Mammary epithelial cell (primary cell): ENCODE measurements at regions of chr12 and their contacts with region 1.

Region 1: GRCh38 chr12:12813120-12814101 is at the start of gene DDX47:
- DNase-seq: peak; percentile 86
- H3K4me3 ChIP-seq: peak within 1 kb of the TSS; percentile 60 to 86 (median 71)
- H3K27ac ChIP-seq: peak within 1 kb of the TSS; percentile 93
- H3K4me1 ChIP-seq: peaks cover 21% of the 10 kb centered on the region
- H3K27me3 ChIP-seq: no peaks in the 10 kb centered on the region
- CTCF ChIP-seq: peak; percentile 93 to 96
- total RNA-seq, gene DDX47: 62.1 to 70.3 TPM

Region 2: GRCh38 chr12:12803186-12803585 is 10.2 kb before region 1 on chr12:
- CTCF ChIA-PET with region 1: no interaction called
- dilution Hi-C with region 1: no loop called
- in situ Hi-C with region 1: no loop called
- intact Hi-C with region 1: loop called (anchors 1 kb)
- DNase-seq: peak; percentile 100
- H3K4me3 ChIP-seq: no peak overlapping the region
- H3K27ac ChIP-seq: peak overlapping the region; percentile 100
- H3K4me1 ChIP-seq: peaks cover 39% of the 10 kb centered on the region
- H3K27me3 ChIP-seq: no peaks in the 10 kb centered on the region
- CTCF ChIP-seq: no peak

Region 3: DNA sequence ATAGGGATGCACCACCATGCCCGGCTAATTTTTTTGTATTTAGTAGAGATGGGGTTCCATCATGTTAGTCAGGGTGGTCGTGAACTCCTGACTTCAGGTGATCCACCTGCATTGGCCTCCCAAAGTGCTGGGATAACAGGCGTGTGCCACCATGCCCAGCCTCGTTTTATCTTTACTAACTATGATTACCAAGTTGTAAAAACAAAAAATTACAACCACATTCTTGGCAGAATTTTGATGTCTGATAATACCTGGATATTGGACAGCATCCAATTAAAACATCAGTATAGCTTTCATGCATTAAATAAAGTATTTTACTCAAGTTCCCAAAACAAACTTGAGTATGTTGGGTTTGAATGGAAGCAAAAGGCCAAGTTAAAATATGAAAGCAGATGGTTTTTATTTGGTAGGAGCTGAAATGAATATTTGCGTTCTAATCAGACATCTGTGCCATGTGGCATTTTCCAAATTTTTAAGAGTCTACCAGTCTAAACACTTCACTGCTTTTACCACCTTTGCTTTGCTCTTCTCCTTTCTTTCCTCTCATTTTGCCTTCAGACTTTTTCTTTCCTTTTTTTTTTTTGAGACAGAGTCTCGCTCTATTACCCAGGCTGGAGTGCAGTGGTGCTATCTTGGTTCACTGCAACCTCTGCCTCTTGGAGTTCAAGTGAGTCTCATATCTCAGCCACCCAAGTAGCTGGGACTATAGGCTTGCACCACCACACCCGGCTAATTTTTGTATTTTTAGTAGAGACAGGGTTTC is 31.8 kb after region 1 on chr12:
- CTCF ChIA-PET with region 1: no interaction called
- dilution Hi-C with region 1: no loop called
- in situ Hi-C with region 1: no loop called
- intact Hi-C with region 1: no loop called
- DNase-seq: peak; percentile 20
- H3K4me3 ChIP-seq: no peak overlapping the region
- H3K27ac ChIP-seq: no peak overlapping the region
- H3K4me1 ChIP-seq: peaks cover 16% of the 10 kb centered on the region
- H3K27me3 ChIP-seq: no peaks in the 10 kb centered on the region
- CTCF ChIP-seq: no peak